K562 (cell line): ENCODE measurements at regions of chr12 and their contacts with region 1.

Region 1: DNA sequence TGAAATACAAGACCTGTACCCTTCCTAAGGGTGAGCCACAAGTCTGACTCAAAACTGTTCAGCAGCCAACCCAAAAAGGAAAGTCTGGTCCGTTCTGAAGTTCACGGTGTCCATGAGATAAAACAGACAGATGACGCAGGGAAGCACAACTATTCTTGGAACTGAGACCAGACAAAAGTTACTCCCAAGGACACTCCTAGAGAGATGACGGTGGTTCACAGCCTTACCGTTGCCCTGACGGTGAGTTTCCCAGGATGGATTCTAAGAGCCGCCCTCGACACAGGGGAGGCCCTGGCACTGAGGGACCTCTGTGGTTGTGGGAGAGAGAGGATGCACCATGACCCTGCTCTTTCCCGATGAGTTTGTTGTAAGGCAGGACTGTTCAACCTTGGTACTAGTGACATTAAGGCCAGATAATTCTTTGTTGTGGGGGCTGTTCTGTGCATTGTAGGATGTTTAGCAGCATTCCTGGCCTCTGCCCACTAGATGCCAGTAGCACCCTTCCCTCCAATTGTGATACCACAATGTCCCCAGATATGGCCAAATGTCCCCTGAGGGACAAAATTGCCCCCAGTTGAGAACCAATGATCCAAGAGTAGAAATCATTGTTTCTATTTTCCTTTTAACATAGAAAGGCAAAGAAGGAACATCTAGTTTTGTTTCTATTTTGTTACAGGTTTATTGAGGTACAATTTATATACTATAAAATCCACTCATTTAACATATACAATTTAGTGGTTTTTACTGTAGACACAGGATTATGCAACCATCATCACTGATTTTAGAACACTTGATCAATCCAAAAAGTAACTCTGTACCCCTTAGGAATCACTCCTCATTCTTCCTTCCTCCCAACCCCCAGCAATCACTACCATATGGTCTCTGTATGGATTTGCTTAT is 23.0 kb downstream of the OR10P1 start:
- DNase-seq: peak in 2 of 4 experiments; percentile 39 to 67
- ATAC-seq: peak; percentile 51
- H3K4me3 ChIP-seq: no peak overlapping the region
- H3K27ac ChIP-seq: no peak overlapping the region
- H3K4me1 ChIP-seq: peaks cover 0 to 11% of the 10 kb centered on the region in 2 experiments; a peak in 3 of 5 replicates
- H3K27me3 ChIP-seq: peaks cover 2 to 3% of the 10 kb centered on the region in 2 experiments; a peak in 1 of 5 replicates
- CTCF ChIP-seq: peak; percentile 43 to 45 (median 45); a peak in 5 of 6 replicates
- EP300 ChIP-seq: no peak
- POLR2A ChIP-seq: no peak
- RAD21 ChIP-seq: peak; percentile 42 to 61

Region 2: GRCh38 chr12:55647027-55647426 is 12.7 kb before region 1 on chr12:
- CTCF ChIA-PET with region 1: interaction called, 3 read pairs
- POLR2A ChIA-PET with region 1: interaction called, 10 read pairs
- in situ Hi-C with region 1: no loop called
- intact Hi-C with region 1: no loop called
- DNase-seq: no peak
- ATAC-seq: no peak
- H3K4me3 ChIP-seq: no peak overlapping the region
- H3K27ac ChIP-seq: no peak overlapping the region; the same call in 2 of the 3 replicates
- H3K4me1 ChIP-seq: peaks cover 9% of the 10 kb centered on the region in 2 experiments; a peak in 3 of 5 replicates
- H3K27me3 ChIP-seq: no peaks in the 10 kb centered on the region
- CTCF ChIP-seq: no peak
- EP300 ChIP-seq: no peak
- POLR2A ChIP-seq: no peak
- RAD21 ChIP-seq: no peak

Region 3: DNA sequence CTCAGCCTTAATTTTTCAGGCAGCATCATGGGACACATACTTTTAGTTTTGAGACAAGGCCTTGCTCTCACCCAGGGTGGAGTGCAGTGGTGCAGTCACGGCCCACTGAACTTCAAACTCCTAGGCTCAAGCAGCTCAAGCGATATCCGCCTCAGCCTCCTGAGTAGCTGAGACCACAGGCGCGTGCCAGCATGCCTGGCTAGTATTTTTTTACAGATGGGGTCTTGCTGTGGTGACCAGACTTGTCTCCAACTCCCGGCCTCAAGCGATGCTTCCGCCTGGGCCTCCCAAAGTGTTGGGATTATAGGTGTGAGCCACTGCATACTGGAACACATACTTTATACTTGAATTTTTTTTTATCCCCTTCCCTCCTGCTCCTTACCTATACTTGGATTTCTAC is 63.2 kb after region 1 on chr12:
- CTCF ChIA-PET with region 1: no interaction called
- POLR2A ChIA-PET with region 1: no interaction called
- in situ Hi-C with region 1: no loop called
- intact Hi-C with region 1: loop called (anchors 1 kb)
- DNase-seq: no peak
- ATAC-seq: no peak
- H3K4me3 ChIP-seq: no peak overlapping the region
- H3K27ac ChIP-seq: no peak overlapping the region
- H3K4me1 ChIP-seq: peaks cover 13 to 31% of the 10 kb centered on the region in 2 experiments; a peak in 4 of 5 replicates
- H3K27me3 ChIP-seq: no peaks in the 10 kb centered on the region
- CTCF ChIP-seq: no peak
- EP300 ChIP-seq: no peak
- POLR2A ChIP-seq: no peak
- RAD21 ChIP-seq: no peak

Region 4: DNA sequence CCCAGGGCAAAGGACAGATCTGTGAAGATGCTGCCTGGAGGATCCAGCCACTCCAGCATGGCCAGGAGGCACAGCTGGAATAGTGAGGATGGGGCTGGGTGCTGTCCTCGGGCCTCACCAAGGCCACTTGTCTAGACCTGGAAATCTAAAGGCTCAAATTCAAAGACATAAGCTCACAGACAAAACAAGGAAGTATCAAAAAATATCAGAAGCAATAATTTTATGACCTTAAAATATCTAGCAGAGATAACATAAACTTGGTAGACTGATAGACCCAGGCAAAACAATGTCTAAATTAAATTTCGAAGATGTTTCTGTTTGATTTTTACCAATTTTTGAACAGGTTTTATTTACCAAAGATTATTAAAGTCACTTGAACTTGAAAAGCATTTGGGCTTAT is 205.6 kb after region 1 on chr12:
- CTCF ChIA-PET with region 1: no interaction called
- POLR2A ChIA-PET with region 1: no interaction called
- in situ Hi-C with region 1: no loop called
- intact Hi-C with region 1: no loop called
- DNase-seq: no peak
- ATAC-seq: no peak
- H3K4me3 ChIP-seq: no peak overlapping the region
- H3K27ac ChIP-seq: no peak overlapping the region
- H3K4me1 ChIP-seq: no peaks in the 10 kb centered on the region
- H3K27me3 ChIP-seq: no peaks in the 10 kb centered on the region
- CTCF ChIP-seq: no peak
- EP300 ChIP-seq: no peak
- POLR2A ChIP-seq: no peak
- RAD21 ChIP-seq: no peak